ENCODE measurements at regions of chr13 and their contacts with region 1.

Region 1: DNA sequence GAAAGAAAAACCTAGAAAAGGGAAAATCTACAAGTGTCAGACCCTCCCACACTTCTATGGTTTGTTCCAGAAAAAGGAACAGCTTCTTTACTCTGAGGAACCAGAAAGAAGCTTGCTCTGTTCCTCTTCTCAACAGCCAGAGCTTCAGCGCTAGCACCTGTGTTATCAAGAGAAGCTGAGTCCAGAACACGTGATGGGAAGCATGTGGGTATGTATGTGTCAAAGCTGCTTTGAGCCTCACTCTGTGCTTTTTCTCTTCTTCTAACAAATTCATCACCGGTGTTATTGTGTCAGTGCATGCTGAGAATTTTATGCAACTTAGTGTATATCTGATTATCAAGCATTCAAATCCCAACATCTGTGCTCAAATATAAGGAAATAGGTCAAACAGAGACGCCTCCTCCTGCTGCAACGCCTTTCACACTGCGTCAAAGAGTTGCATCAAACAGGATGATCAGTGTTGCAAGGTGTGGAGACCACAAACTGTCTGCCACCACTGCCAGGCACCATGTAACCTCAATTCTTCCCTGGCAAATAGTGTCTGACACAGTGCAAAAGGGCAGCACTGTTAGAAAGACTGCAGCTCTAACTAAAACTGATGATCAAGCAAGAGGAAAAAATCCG is 83.9 kb downstream of the LRRC63 start:
- DNase-seq: peak; percentile 47 to 87 (median 84)
- H3K4me3 ChIP-seq: no peak overlapping the region
- H3K27ac ChIP-seq: peak overlapping the region in 1 of 2 experiments; percentile 54
- H3K4me1 ChIP-seq: peaks cover 11 to 44% (median 27%) of the 10 kb centered on the region in 4 experiments
- H3K27me3 ChIP-seq: no peaks in the 10 kb centered on the region

Region 2: DNA sequence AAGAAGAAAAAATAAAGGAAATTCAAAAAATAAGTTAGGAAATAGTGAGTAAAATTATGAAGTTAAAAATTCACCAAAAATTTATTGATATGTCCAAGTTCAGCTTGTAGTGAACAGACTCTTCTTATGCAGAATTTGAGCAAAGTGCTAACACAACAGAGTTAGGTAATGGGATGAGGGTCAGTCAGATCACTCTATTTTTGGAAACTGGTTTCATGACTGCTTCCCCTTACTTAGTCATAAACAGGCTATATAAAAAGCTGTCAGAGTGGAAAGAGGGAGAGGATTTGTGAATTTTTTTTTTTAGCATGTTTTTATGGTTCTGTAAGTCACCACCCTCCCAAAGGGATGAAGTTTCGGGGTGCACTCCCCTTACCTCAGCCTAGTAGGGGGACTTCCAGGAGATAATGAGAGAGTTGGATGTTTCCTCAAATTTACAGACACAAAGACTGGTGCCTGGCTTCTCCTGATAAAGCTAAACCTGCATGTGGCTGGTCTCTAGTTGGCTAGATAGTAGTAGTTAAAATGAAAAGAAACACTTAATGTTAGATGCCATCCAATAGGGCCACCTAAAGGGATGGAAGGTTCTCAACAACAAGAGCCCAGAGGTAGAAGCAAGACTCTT is 195.3 kb before region 1 on chr13:
- CTCF ChIA-PET with region 1: no interaction called
- POLR2A ChIA-PET with region 1: no interaction called
- DNase-seq: peak; percentile 25 to 77 (median 61)
- H3K4me3 ChIP-seq: no peak overlapping the region
- H3K27ac ChIP-seq: no peak overlapping the region
- H3K4me1 ChIP-seq: peaks cover 7 to 25% (median 15%) of the 10 kb centered on the region in 4 experiments
- H3K27me3 ChIP-seq: no peaks in the 10 kb centered on the region

Region 3: DNA sequence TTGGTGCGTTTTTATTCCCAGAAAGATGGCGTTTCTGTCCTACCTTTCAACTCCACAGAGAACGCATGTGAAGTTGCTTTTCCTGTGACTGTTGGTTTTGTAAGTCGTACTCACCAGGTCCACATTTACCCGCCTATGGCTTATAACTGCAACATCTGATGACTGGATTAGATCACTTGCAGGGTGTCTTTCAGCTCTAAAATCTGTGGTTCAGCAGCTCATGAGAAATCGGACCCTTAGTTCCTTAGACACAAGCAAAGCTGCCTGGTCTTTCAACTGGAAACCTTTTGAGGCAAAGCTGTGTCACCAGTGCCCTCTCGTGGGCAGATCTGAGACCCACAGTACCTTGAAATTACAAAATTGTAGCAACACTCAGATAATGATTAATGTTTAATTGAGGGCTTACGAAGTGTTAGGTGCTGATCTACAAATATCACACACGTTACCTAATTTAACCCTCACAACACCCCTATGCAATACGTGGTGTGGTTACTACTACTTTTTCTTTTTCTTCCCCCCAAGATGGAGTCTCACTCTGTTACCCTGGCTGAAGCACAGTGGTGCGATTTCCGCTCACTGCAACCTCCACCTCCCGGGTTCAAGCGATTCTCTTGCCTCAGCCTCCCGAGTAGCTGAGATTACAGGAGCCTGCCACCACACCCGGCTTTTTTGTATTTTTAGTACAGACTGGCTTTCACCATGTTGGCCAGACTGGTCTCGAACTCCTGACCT is 26.1 kb after region 1 on chr13:
- CTCF ChIA-PET with region 1: interaction called, 13 read pairs
- POLR2A ChIA-PET with region 1: no interaction called
- DNase-seq: peak; percentile 64 to 86 (median 81)
- H3K4me3 ChIP-seq: no peak overlapping the region
- H3K27ac ChIP-seq: no peak overlapping the region
- H3K4me1 ChIP-seq: peaks cover 0 to 3% (median 1%) of the 10 kb centered on the region in 4 experiments
- H3K27me3 ChIP-seq: no peaks in the 10 kb centered on the region